PC-3 (cell line): ENCODE measurements at regions of chr3 and their contacts with region 1.

Region 1: DNA sequence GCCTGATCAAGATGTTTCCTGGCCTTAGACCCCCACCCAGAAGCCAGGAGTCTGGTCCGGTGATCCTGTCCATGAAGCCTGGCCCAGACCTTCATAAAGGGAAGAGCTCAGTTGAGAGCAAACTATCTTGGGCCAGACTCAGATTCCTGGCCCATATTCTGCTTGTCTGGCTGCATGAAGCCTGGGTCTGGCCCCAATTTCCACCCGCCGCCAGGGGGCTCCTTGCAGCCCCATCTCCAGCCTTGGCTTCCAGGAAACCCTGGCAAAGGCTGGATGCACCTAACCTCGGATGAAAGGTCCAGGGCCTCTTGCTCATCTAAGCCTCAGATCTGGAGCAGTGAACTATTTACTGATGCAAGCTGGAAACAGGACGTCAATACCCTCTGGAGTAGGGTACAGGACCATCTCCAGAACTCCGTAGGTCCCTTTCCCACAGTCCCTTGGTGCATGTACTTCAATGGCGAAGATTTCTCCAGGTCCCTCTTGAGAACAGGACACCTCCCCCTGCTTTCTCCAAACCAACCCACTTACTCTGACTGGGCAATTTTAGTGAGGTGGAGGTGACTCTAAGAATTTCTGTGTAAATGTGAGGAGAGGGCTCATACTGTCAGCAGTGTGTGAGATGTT is 5.6 kb downstream of the FOXL2 start:
- DNase-seq: peak; percentile 53
- ATAC-seq: peak; percentile 64
- H3K4me3 ChIP-seq: no peak overlapping the region
- H3K27ac ChIP-seq: no peak overlapping the region
- H3K4me1 ChIP-seq: no peaks in the 10 kb centered on the region
- H3K27me3 ChIP-seq: no peaks in the 10 kb centered on the region
- CTCF ChIP-seq: peak; percentile 68

Region 2: GRCh38 chr3:138974462-138974861 is 33.1 kb after region 1 on chr3:
- CTCF ChIA-PET with region 1: interaction called, 6 read pairs
- POLR2A ChIA-PET with region 1: no interaction called
- intact Hi-C with region 1: loop called (anchors 1 kb)
- DNase-seq: peak; percentile 65
- ATAC-seq: peak; percentile 92
- H3K4me3 ChIP-seq: no peak overlapping the region
- H3K27ac ChIP-seq: no peak overlapping the region
- H3K4me1 ChIP-seq: peaks cover 8% of the 10 kb centered on the region
- H3K27me3 ChIP-seq: no peaks in the 10 kb centered on the region
- CTCF ChIP-seq: no peak

Region 3: GRCh38 chr3:139218046-139218445 is 276.7 kb after region 1 on chr3:
- CTCF ChIA-PET with region 1: interaction called, 10 read pairs
- POLR2A ChIA-PET with region 1: no interaction called
- intact Hi-C with region 1: loop called (anchors 10 kb)
- DNase-seq: no peak
- ATAC-seq: no peak
- H3K4me3 ChIP-seq: no peak overlapping the region
- H3K27ac ChIP-seq: no peak overlapping the region
- H3K4me1 ChIP-seq: no peaks in the 10 kb centered on the region
- H3K27me3 ChIP-seq: 0 out of 2 replicates have a peak, but pooled peaks cover 3% of the 10 kb centered on the region
- CTCF ChIP-seq: no peak

Region 4: DNA sequence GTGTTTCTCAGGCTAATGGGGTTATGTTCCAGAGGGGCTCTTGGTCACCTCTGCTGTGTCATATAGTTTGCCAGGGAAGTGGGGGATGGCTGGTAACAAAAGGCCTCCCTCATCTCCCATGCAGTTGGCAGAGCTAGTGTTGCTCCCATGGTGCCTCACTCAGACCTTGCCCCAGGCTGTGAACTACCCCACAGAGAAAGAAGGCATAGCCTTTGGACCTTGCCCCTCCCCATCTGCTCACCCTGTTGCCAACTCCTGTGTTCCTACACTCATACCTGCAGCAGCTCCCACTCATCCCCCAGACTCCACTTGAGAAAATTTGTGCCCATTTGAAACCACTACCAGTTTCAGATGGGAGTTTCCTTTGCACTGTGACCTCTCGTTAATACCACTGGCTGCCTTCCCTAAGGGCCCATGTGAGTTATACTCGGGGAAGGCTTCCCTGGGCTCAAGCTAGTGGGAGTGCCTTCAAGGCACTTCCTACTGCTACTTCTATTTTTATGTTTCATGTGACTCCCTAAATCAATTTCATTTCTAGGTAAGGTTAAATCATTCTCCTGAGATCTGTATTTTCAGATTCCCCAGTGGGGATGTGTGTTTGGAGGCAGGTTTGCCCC is 473.3 kb after region 1 on chr3:
- CTCF ChIA-PET with region 1: no interaction called
- POLR2A ChIA-PET with region 1: no interaction called
- intact Hi-C with region 1: no loop called
- DNase-seq: no peak
- ATAC-seq: no peak
- H3K4me3 ChIP-seq: no peak overlapping the region
- H3K27ac ChIP-seq: no peak overlapping the region
- H3K4me1 ChIP-seq: no peaks in the 10 kb centered on the region
- H3K27me3 ChIP-seq: no peaks in the 10 kb centered on the region
- CTCF ChIP-seq: no peak